ENCODE measurements at regions of chr11 and their contacts with region 1.

Region 1: GRCh38 chr11:121039971-121040613 is 16.2 kb downstream of the TBCEL start:
- DNase-seq: no peak
- ATAC-seq: no peak
- H3K4me3 ChIP-seq: no peak overlapping the region
- H3K27ac ChIP-seq: no peak overlapping the region
- H3K4me1 ChIP-seq: peaks cover 54% of the 10 kb centered on the region
- H3K27me3 ChIP-seq: no peaks in the 10 kb centered on the region
- CTCF ChIP-seq: no peak
- EP300 ChIP-seq: no peak
- POLR2A ChIP-seq: no peak
- RAD21 ChIP-seq: no peak

Region 2: DNA sequence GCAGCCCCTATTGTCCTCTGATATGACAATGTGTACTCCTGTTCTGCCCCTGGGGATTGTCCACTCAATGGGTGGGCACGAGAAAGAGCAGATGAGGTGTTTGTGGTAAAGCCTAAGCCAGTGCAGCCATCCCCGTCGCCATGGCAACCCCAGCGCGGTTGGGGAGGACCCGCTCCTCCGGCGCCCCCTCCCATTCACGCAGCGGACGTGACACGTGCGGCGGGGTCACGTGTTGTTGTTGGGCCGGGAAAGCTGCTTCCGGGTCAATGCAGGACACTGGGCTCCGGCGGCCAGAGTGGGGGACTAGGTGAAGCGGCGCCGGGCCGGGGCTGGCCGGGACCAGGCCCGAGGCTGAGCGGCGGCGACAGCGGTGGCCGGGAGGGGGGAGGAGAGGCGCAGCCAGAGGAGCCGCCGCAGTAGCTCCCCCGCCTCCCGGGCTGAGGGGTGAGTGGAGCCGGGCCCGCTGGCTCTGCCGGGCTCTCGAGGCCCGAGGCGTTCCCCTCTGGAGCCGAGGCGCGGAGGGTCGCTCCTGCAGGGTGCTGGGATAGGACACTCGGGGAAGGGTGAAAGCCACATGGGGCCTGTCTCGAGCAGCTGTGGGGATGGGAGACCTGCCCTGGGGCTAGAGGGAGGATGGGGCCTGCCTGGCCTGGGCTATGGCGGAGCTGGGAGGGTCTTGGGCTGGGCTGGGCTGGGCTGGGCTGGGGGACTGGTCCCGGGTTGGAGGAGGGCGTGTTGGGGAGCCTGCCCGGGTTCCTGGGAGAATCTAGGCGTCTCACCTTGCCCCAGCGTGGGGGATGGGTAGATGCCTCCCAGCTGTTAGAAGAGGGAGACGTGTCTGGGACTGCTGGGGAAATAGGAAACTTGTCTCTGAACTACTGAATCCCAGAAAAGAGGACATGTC is 16.0 kb before region 1 on chr11 and contains the start of gene TBCEL:
- CTCF ChIA-PET with region 1: no interaction called
- POLR2A ChIA-PET with region 1: interaction called, 11 read pairs
- in situ Hi-C with region 1: no loop called
- intact Hi-C with region 1: no loop called
- DNase-seq: peak; percentile 83
- ATAC-seq: peak; percentile 96
- H3K4me3 ChIP-seq: peak within 1 kb of the TSS; percentile 84 to 96 (median 84)
- H3K27ac ChIP-seq: peak within 1 kb of the TSS; percentile 58
- H3K4me1 ChIP-seq: peaks cover 21% of the 10 kb centered on the region
- H3K27me3 ChIP-seq: no peaks in the 10 kb centered on the region; a peak in 1 of 5 replicates
- CTCF ChIP-seq: no peak
- EP300 ChIP-seq: no peak
- POLR2A ChIP-seq: peak in 1 of 2 experiments; percentile 51; a peak in 2 of 4 replicates
- RAD21 ChIP-seq: peak; percentile 51; the same call in 1 of the 2 replicates
- total RNA-seq, gene TBCEL: 12.5 and 12.8 TPM in 2 replicates

Measured in HepG2 (cell line).